A673 (cell line): ENCODE measurements at regions of chr16 and their contacts with region 1.

Region 1: DNA sequence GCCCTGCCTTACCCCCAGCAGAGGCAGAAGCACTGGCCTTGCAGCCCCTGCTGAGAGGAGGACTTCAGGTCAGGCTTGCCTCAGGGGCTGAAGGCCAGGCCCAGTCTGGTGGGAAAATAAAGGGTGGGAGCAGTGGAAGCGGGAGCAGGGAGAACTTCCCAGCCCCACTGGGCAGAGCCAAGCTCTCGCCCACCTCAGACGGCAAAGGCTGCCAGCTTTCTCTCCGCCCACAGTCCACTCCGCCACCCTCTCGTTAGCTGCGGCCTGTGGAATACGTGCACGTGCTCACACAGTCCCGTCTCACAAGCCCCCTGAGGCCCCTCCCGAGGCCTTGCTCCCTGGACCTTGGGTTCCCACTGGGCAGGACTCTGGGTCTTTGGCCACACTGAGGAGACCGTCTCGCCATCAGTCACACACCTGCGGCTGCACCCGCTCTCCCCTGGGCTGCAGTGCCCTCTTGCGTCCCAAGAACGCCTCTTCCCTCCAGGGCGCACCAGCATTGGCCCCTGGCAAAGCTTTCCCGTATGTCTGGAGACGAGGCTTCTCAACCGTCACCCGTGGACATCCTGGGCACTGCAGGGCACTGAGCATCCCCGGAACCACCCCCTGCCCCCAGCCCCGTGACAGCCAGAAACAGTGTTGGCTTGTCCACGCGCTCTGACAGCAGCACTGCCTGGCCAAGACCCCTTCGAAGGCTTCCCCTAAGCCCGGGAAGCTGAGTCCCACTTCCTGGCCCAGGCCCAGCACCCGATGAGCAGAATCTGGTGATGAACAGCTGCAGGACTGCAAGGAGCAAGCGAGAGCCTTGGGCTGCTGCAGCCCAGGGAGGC is 8.3 kb downstream of the MRPL28 start:
- DNase-seq: peak; percentile 88
- H3K4me3 ChIP-seq: no peak overlapping the region
- H3K27ac ChIP-seq: no peak overlapping the region
- H3K4me1 ChIP-seq: no peaks in the 10 kb centered on the region
- H3K27me3 ChIP-seq: no peaks in the 10 kb centered on the region
- CTCF ChIP-seq: peak; percentile 89

Region 2: GRCh38 chr16:442976-443375 is 80.9 kb after region 1 on chr16:
- CTCF ChIA-PET with region 1: no interaction called
- POLR2A ChIA-PET with region 1: no interaction called
- intact Hi-C with region 1: no loop called
- DNase-seq: no peak
- H3K4me3 ChIP-seq: no peak overlapping the region
- H3K27ac ChIP-seq: no peak overlapping the region
- H3K4me1 ChIP-seq: no peaks in the 10 kb centered on the region
- H3K27me3 ChIP-seq: no peaks in the 10 kb centered on the region
- CTCF ChIP-seq: no peak

Region 3: GRCh38 chr16:535446-536405 is 173.6 kb after region 1 on chr16:
- CTCF ChIA-PET with region 1: no interaction called
- POLR2A ChIA-PET with region 1: interaction called, 13 read pairs
- intact Hi-C with region 1: no loop called
- DNase-seq: no peak
- H3K4me3 ChIP-seq: no peak overlapping the region
- H3K27ac ChIP-seq: no peak overlapping the region
- H3K4me1 ChIP-seq: no peaks in the 10 kb centered on the region
- H3K27me3 ChIP-seq: no peaks in the 10 kb centered on the region
- CTCF ChIP-seq: no peak